ENCODE measurements at regions of chr9 and their contacts with region 1.

Region 1: DNA sequence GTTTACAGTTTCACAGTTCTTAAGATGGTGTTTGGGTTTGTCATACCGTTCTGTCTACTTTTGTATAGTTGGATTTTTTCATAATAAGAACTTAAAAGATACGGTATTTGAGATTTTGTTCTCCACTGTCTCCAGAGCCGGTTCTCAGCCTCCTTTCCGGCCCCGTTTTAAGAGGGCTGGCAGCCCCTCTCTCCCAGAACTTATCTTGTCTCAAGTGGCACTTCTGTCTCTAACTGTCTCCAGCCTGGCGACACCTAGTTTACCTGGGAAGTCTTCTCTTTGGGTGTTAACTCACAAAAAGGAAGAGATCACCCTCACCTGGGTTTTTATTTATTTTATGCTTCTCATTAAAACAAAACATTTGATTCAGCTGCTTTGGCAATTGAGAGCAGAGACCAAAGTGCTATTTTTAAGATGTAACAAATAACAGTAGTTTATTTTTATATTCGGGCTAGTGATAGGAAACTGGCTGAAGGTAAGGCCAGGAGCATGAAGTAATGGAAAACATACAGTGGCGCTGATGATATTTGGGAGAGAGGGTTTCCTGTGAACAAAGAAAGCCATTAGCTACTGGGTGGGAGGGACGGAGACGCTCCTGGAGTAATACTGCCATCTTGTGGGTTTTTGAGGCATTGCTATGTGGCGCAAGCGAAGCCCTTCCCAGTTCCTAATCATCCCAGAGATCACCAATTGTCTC is 48.3 kb downstream of the ACER2 start:
- DNase-seq: peak; percentile 71
- H3K4me3 Mint-ChIP-seq: peak overlapping the region; percentile 28
- H3K27ac Mint-ChIP-seq: no peak overlapping the region
- H3K4me1 Mint-ChIP-seq: peaks cover 8% of the 10 kb centered on the region
- H3K27me3 Mint-ChIP-seq: no peaks in the 10 kb centered on the region

Region 2: GRCh38 chr9:18255158-18255629 is 1202.0 kb before region 1 on chr9:
- CTCF ChIA-PET with region 1: no interaction called
- intact Hi-C with region 1: loop called (anchors 1 kb)
- DNase-seq: peak; percentile 86
- H3K4me3 Mint-ChIP-seq: no peak overlapping the region
- H3K27ac Mint-ChIP-seq: no peak overlapping the region
- H3K4me1 Mint-ChIP-seq: peaks cover 2% of the 10 kb centered on the region
- H3K27me3 Mint-ChIP-seq: peaks cover 3% of the 10 kb centered on the region

Region 3: DNA sequence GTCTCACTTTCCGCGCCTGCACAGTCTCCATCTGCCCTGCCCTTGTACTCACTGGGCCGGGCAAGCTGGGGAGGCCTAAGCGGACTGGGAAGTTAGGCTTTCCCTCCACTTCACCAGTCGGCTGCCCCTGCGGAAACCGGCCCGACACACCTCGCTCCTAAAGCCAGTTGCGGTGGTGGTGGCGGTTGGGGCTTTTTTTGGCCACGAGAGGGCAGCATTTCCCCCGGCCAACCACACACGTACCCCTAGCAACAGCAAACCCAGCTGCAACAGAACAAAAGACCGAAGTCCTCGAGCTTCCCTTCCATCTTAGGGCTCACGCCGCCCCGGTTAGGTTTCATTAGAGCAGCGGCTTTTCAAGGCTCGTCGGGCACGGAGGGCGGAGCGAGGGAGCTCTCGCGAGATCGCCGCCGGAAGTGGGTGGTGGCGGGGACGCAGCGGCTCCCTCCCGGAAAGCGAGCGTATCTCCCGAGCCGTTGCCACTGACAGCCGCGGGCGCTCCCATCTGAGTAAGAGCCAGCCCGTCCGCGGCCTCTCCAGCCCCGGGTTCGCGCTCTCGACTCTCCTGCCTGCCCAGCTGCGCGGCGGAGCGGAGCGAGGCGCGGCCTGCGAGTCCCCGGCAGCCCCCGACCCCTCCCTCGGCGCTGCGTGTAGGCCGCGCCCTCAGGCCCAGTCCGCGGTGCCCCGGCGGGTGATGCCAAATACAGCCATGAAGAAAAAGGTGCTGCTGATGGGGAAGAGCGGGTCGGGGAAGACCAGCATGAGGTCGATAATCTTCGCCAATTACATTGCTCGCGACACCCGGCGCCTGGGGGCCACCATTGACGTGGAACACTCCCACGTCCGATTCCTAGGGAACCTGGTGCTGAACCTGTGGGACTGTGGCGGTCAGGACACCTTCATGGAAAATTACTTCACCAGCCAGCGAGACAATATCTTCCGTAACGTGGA is 407.9 kb before region 1 on chr9 and contains the start of gene RRAGA:
- CTCF ChIA-PET with region 1: interaction called, 9 read pairs
- intact Hi-C with region 1: loop called (anchors 1 kb)
- DNase-seq: peak; percentile 94
- H3K4me3 Mint-ChIP-seq: peak within 1 kb of the TSS; percentile 85
- H3K27ac Mint-ChIP-seq: peak within 1 kb of the TSS; percentile 90
- H3K4me1 Mint-ChIP-seq: peaks cover 25% of the 10 kb centered on the region
- H3K27me3 Mint-ChIP-seq: no peaks in the 10 kb centered on the region
- total RNA-seq, gene RRAGA: 21.6 to 22.3 TPM

Region 4: DNA sequence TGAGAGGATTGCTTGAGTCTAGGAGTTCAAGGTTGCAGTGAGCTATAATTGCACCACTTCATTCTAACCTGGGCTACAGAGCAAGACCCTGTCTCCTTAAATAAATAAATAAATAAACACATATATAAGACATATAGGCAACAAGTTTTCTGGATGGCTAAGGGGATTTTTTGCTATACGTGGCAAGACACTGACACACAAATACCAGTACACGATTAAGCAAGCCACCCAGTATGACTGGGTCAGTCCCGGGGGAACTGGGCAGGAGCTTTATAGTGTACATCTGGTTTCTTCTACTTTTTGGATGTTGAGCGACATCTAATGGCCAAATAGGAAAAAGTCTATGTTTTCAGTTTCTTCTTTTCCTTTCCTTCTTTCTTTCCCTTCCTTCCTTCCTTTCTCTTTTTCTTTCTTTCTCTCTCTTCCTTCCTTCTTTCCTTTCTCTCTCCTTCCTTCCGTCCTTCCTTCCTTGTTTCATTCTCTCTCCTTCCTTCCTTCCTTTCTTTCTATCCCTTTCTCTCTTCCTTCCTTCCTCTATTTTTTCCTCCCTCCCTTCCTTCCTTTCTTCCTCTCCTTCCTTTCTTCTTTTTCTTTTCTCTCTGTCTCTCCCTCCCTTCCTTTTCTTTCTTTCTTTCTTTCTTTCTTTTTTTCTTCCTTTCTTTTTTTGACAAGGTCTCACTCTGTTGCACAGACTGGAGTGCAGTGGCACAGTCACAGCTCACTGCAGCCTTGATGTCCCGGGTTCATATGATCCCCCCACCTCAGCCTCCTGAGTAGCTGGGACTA is 282.8 kb before region 1 on chr9:
- CTCF ChIA-PET with region 1: interaction called, 13 read pairs
- intact Hi-C with region 1: loop called (anchors 1 kb)
- DNase-seq: peak; percentile 77
- H3K4me3 Mint-ChIP-seq: no peak overlapping the region
- H3K27ac Mint-ChIP-seq: no peak overlapping the region
- H3K4me1 Mint-ChIP-seq: peaks cover 22% of the 10 kb centered on the region
- H3K27me3 Mint-ChIP-seq: no peaks in the 10 kb centered on the region

Region 5: DNA sequence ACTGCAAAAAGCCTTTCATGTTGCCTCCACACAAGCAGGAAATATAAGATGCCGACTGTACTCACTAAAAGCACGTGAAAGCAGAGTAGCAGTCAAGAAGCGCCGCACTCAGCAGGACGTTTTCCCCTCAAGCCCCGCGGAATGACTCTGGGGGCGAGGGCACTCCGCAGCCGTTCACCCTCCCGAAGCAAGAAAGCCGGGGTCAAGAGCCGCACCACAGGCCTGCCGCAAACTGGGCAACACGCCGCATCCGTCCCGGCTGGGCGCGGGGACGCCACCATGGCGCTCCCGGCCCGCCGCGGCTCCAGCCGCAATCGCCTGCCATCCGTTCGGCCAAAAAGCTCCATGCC is 77.5 kb before region 1 on chr9:
- CTCF ChIA-PET with region 1: no interaction called
- intact Hi-C with region 1: loop called (anchors 1 kb)
- DNase-seq: no peak
- H3K4me3 Mint-ChIP-seq: peak overlapping the region; percentile 91
- H3K27ac Mint-ChIP-seq: peak overlapping the region; percentile 97
- H3K4me1 Mint-ChIP-seq: peaks cover 37% of the 10 kb centered on the region
- H3K27me3 Mint-ChIP-seq: no peaks in the 10 kb centered on the region

Region 6: DNA sequence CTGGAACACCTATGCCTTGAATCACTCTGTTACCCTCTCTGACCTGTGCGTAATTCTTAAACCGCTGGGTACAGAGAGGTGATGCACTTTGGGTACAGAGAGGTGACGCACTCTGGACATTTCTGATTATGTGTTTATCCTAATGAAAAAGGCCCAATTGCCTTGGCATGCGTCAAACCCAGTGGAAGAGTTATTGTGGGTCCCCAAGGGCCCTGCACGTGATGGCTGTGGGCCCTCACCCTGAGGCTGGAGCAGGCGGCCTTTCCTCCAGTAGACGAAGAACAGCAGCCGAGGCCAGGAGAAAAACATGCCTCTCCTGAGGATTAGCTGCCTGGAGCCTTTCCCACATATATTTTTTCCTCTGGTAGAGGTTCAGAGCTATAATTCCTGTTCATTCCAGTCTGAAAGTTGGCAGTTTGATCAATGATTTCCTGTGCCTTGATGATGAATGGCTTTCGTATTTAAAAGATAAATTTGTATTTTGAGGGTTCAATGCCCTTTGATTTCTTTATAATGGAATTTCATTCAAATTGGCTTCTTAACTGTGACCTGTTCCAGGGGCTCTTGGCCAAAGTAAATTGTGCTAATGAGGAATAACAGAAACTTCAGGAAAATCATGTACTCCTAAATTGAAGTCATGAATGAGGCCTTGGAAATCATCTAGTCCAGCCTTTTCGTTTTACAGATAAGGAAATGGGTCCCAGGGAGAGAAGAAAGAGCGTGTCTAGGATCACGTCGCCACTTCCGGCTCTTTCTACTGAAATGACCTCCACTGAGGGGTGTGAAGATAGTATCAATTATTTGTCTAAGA is 25.6 kb before region 1 on chr9:
- CTCF ChIA-PET with region 1: no interaction called
- intact Hi-C with region 1: no loop called
- DNase-seq: no peak
- H3K4me3 Mint-ChIP-seq: no peak overlapping the region
- H3K27ac Mint-ChIP-seq: no peak overlapping the region
- H3K4me1 Mint-ChIP-seq: no peaks in the 10 kb centered on the region
- H3K27me3 Mint-ChIP-seq: no peaks in the 10 kb centered on the region

Measured in activated naive CD4-positive, alpha-beta T cell treated with anti-CD3 and anti-CD28 coated beads for 36 hours (primary cell).